Mammary epithelial cell (primary cell): ENCODE measurements at regions of chr3 and their contacts with region 1.

Region 1: DNA sequence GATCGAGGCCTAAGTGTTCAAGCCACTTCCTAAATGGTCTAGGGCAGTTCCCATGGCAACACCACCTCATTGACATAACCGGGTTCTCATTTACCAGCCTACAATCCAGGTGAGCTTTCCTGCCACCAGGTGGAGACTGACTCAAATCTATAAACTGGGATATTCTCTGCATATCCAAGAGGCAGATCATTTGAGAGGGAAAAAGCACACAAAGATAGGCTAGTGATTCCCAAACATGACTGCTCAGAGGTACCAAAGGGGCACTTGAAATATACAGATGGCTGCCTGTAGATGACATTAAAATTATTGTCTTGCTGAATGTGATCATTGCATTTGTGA is 141.3 kb upstream of the PROK2 start:
- DNase-seq: peak; percentile 69
- H3K4me3 ChIP-seq: no peak overlapping the region
- H3K27ac ChIP-seq: no peak overlapping the region
- H3K4me1 ChIP-seq: peaks cover 7% of the 10 kb centered on the region
- H3K27me3 ChIP-seq: no peaks in the 10 kb centered on the region
- CTCF ChIP-seq: peak; percentile 83 to 86

Region 2: DNA sequence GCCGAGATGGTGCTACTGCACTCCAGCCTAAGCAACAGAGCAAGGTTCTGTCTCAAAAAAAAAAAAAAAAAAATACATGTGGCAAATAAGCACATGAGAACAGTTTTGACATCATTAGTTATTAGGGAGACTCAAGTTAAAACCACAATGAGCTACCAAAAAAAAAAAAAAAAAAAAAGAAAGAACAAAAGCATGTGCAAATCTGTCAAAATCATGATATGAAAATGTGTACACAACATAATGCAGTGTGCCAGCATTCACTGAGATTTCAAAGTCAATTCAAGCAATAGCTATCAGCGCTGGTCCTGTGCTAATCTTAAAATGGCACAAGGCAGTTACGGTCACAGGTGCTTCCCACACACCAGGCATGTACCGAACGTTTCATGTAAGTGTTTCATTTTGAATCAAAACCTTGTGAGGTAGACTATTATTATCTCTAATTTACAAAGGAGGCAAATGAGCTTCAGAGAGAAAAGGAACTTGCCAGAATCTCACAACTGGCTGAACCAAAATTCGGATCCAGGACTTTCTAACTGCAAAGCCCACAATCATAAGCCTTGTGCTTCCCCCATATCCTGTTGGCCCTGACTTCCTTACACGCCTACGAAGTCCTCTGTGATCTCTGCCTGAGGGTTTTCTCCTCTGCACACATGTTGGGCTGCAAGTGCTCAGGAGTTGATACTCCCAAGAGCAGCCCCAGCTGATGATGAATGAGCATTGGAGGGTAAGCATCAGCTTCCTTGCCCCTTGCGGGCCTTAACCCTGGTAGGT is 58.8 kb after region 1 on chr3:
- CTCF ChIA-PET with region 1: interaction called, 23 read pairs
- dilution Hi-C with region 1: no loop called
- in situ Hi-C with region 1: no loop called
- intact Hi-C with region 1: no loop called
- DNase-seq: no peak
- H3K4me3 ChIP-seq: no peak overlapping the region
- H3K27ac ChIP-seq: no peak overlapping the region
- H3K4me1 ChIP-seq: peaks cover 16% of the 10 kb centered on the region
- H3K27me3 ChIP-seq: no peaks in the 10 kb centered on the region
- CTCF ChIP-seq: no peak

Region 3: DNA sequence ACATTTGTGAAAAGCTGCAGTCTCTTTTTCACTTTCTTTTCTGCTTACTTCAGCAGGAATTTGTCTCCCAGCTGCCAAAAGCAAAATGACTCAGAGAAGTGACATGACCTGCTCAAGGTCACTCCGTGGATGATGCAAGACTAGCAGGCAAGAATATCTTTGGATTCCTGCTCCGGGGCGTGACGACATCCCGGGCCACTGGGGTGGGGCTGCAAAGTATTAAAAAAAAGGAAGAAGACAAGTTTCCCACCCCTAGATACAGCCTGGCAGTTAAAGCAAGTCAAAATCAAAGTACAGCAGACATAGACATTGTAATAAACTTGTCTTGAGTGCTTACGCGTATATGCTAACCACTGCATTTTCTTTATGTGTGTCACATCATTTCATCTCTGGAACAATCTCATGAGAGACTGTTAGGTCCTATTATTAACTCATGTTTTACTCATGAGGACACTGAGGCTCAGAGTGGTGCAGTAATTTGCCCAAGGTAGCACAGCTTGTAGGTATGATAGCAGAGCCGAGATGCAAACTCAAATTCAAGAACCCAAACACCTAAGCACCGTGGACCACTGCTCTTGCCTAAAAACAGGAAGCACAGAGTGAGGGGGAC is 343.9 kb after region 1 on chr3:
- CTCF ChIA-PET with region 1: interaction called, 3 read pairs
- dilution Hi-C with region 1: no loop called
- in situ Hi-C with region 1: no loop called
- intact Hi-C with region 1: loop called (anchors 1 kb)
- DNase-seq: peak; percentile 67
- H3K4me3 ChIP-seq: no peak overlapping the region
- H3K27ac ChIP-seq: no peak overlapping the region
- H3K4me1 ChIP-seq: peaks cover 10% of the 10 kb centered on the region
- H3K27me3 ChIP-seq: peaks cover 4% of the 10 kb centered on the region
- CTCF ChIP-seq: no peak